ENCODE measurements at regions of chr5 and their contacts with region 1.

Region 1: GRCh38 chr5:100903039-100903887 is at the start of gene ST8SIA4:
- DNase-seq: peak; percentile 76 to 80 (median 78)
- H3K4me3 ChIP-seq: peak within 1 kb of the TSS; percentile 72 to 86 (median 84)
- H3K4me3 Mint-ChIP-seq: peak within 1 kb of the TSS; percentile 90 to 99
- H3K27ac ChIP-seq: peak within 1 kb of the TSS; percentile 96 to 98
- H3K27ac Mint-ChIP-seq: peak within 1 kb of the TSS; percentile 93 to 99 (median 99)
- H3K4me1 ChIP-seq: peaks cover 34 to 43% of the 10 kb centered on the region in 2 donors
- H3K4me1 Mint-ChIP-seq: peaks cover 40% of the 10 kb centered on the region
- H3K27me3 ChIP-seq: no peaks in the 10 kb centered on the region
- H3K27me3 Mint-ChIP-seq: no peaks in the 10 kb centered on the region
- CTCF ChIP-seq: no peak
- polyA plus RNA-seq, gene ST8SIA4: 12.4 to 36.4 (median 30.7) TPM

Region 2: GRCh38 chr5:100777680-100778281 is 125.5 kb before region 1 on chr5:
- intact Hi-C with region 1: loop called (anchors 5 kb)
- DNase-seq: peak; percentile 92 to 97 (median 96)
- H3K4me3 ChIP-seq: peak overlapping the region; percentile 0 to 69 (median 34)
- H3K4me3 Mint-ChIP-seq: peak overlapping the region; percentile 6 to 83
- H3K27ac ChIP-seq: peak overlapping the region; percentile 37 to 99
- H3K27ac Mint-ChIP-seq: peak overlapping the region; percentile 91 to 100 (median 97)
- H3K4me1 ChIP-seq: peaks cover 47 to 63% of the 10 kb centered on the region in 2 donors
- H3K4me1 Mint-ChIP-seq: peaks cover 55% of the 10 kb centered on the region
- H3K27me3 ChIP-seq: no peaks in the 10 kb centered on the region
- H3K27me3 Mint-ChIP-seq: peaks cover 0 to 7% (median 0%) of the 10 kb centered on the region in 3 donors
- CTCF ChIP-seq: no peak

Region 3: DNA sequence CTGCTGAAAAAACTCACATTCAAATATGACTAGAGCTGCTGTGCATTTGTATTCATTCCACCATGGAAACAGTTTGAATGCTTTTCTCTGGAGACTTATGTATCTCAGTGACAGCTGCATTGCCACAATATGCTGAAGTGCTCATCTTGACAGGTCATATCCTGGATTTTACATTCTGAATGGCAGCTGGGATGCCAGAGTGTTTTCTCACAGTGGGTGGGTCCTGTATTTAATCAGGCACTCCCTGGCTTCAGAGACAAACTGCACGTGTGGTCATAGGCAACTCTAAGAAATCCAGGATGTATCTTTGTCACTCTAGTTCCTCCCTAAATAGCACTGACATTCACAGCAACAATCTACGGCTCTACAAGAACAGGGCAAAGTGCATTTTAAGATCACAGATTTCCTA is 75.8 kb before region 1 on chr5:
- intact Hi-C with region 1: loop called in 1 of 2 experiments (anchors 5 kb)
- DNase-seq: peak; percentile 25 to 57 (median 26)
- H3K4me3 ChIP-seq: peak overlapping the region in 1 of 3 experiments; percentile 45
- H3K4me3 Mint-ChIP-seq: no peak overlapping the region
- H3K27ac ChIP-seq: peak overlapping the region in 1 of 2 donors; percentile 88
- H3K27ac Mint-ChIP-seq: peak overlapping the region; percentile 85 to 96 (median 90)
- H3K4me1 ChIP-seq: peaks cover 35 to 38% of the 10 kb centered on the region in 2 donors
- H3K4me1 Mint-ChIP-seq: peaks cover 33% of the 10 kb centered on the region
- H3K27me3 ChIP-seq: no peaks in the 10 kb centered on the region
- H3K27me3 Mint-ChIP-seq: peaks cover 0 to 2% (median 0%) of the 10 kb centered on the region in 3 donors
- CTCF ChIP-seq: no peak

Region 4: DNA sequence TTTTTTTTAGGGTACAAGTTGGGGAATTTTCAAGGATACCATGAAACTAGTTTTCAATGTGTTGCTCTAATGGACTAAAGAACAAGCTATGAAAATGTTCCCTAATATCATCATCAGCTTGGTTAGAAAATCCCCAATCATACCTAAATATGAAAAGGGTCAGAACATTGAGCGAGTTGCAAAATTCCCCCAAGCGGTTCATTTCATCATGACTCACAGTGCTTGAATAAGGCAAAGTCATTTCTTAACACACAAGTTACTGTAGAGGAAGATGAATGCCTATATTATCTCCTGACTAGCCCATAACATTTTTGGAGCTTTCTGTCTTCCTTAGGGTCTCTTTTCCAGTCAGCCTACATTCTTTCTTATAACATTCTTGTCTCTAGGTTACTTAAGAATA is 62.9 kb before region 1 on chr5:
- intact Hi-C with region 1: loop called in 1 of 2 experiments (anchors 10 kb)
- DNase-seq: peak; percentile 81 to 95 (median 94)
- H3K4me3 ChIP-seq: peak overlapping the region in 1 of 3 experiments; percentile 26
- H3K4me3 Mint-ChIP-seq: no peak overlapping the region
- H3K27ac ChIP-seq: peak overlapping the region in 1 of 2 donors; percentile 83
- H3K27ac Mint-ChIP-seq: peak overlapping the region; percentile 91 to 97 (median 95)
- H3K4me1 ChIP-seq: peaks cover 22 to 53% of the 10 kb centered on the region in 2 donors
- H3K4me1 Mint-ChIP-seq: peaks cover 32% of the 10 kb centered on the region
- H3K27me3 ChIP-seq: no peaks in the 10 kb centered on the region
- H3K27me3 Mint-ChIP-seq: no peaks in the 10 kb centered on the region
- CTCF ChIP-seq: peak; percentile 15

Region 5: GRCh38 chr5:101045689-101046088 is 142.4 kb after region 1 on chr5:
- intact Hi-C with region 1: no loop called
- DNase-seq: peak in 2 of 3 donors; percentile 0 to 27
- H3K4me3 ChIP-seq: no peak overlapping the region
- H3K4me3 Mint-ChIP-seq: no peak overlapping the region
- H3K27ac ChIP-seq: no peak overlapping the region
- H3K27ac Mint-ChIP-seq: no peak overlapping the region
- H3K4me1 ChIP-seq: no peaks in the 10 kb centered on the region
- H3K4me1 Mint-ChIP-seq: no peaks in the 10 kb centered on the region
- H3K27me3 ChIP-seq: no peaks in the 10 kb centered on the region
- H3K27me3 Mint-ChIP-seq: peaks cover 0 to 2% (median 0%) of the 10 kb centered on the region in 3 donors
- CTCF ChIP-seq: peak; percentile 55

Region 6: DNA sequence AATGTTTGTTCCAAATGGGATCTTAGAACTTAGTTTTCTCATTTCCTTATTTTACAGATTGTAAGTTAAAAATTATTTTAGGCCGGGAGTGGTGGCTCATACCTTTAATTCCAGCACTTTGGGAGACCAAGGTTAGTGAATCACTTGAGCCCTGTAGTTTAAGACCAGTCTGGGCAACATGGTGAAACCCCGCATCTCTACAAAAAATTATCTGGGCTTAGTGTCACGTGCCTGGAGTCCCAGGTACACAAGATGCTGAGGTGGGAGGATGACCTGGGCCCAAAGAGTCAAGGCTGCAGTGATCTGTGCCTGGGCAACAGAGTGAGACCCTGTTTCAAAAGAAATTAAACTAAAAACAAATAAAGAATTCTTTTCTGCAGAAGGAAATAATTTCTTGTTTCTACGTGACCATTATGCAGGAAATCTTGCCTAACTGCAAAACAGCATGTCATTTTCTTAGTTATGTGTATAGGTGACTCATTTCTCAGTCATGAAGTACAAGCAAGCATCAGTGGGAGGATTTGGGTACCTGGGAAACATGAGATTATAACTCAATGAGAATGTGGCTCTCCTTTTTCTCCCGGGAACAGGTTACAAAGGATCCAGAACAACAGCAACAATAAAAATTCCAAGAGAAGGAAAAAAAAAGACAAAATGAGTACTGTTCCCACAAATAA is 374.9 kb after region 1 on chr5:
- intact Hi-C with region 1: no loop called
- DNase-seq: no peak
- H3K4me3 ChIP-seq: no peak overlapping the region
- H3K4me3 Mint-ChIP-seq: no peak overlapping the region
- H3K27ac ChIP-seq: no peak overlapping the region
- H3K27ac Mint-ChIP-seq: no peak overlapping the region
- H3K4me1 ChIP-seq: no peaks in the 10 kb centered on the region
- H3K4me1 Mint-ChIP-seq: no peaks in the 10 kb centered on the region
- H3K27me3 ChIP-seq: no peaks in the 10 kb centered on the region
- H3K27me3 Mint-ChIP-seq: no peaks in the 10 kb centered on the region
- CTCF ChIP-seq: no peak